Mucosa of descending colon (tissue), 3 donors: ENCODE measurements at regions of chr10 and their contacts with region 1.

Region 1: DNA sequence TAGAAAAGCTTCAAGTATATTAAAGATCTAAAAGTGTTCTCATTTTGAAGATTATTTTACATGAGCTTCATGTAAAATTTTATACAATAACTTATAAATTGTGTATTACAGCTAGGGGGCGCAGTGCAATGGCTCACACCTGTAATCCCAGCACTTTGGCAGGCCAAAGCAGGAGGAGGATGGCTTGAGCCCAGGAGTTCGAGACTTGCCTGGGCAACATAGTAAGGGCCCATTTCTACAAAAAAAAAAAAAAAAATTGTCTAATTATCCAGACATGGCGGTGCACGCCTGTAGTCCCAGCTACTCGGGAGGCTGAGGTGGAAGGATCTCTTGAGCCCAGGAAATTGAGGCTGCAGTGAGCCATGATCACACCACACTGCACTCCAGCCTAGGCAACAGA is 16.6 kb downstream of the ACBD5 start:
- DNase-seq: peak in 2 of 3 donors; percentile 47 to 72
- ATAC-seq: peak; percentile 77
- H3K4me3 ChIP-seq: no peak overlapping the region
- H3K4me1 ChIP-seq: no peaks in the 10 kb centered on the region
- CTCF ChIP-seq: peak; percentile 37

Region 2: GRCh38 chr10:27258838-27259812 is 35.2 kb after region 1 on chr10:
- intact Hi-C with region 1: no loop called
- DNase-seq: peak in 2 of 3 donors; percentile 51 to 54
- ATAC-seq: peak; percentile 72
- H3K4me3 ChIP-seq: no peak overlapping the region
- H3K4me1 ChIP-seq: no peaks in the 10 kb centered on the region
- CTCF ChIP-seq: no peak

Region 3: DNA sequence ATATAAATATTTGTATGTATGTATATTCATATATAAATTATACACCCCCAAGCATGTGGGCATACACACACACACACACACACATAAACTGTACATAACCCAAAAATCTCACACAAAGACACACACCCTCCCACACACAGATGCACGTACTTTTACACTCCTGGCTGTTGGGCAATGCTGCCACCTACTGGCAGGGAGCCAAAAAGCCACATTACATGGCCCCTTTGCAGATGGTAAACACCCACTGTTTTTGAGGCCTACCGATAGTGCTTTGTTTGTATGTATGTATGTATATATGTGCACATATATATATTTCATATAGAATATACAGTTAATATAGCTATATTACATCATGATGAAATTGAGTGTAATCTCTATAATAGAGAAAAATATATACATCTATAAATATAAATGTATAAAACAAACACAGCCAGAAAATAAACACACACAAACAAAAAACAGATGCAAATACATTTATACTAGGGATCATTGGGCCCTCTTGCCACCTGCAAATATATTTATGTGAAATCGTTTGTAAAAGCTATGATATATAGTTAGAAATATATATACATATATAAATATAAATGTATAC is 136.7 kb after region 1 on chr10:
- intact Hi-C with region 1: loop called in 1 of 2 experiments (anchors 10 kb)
- DNase-seq: peak; percentile 65 to 81 (median 80)
- ATAC-seq: peak; percentile 92
- H3K4me3 ChIP-seq: no peak overlapping the region
- H3K4me1 ChIP-seq: no peaks in the 10 kb centered on the region
- CTCF ChIP-seq: peak; percentile 66

Region 4: GRCh38 chr10:27474741-27475140 is 250.8 kb after region 1 on chr10:
- intact Hi-C with region 1: no loop called
- DNase-seq: no peak
- ATAC-seq: no peak
- H3K4me3 ChIP-seq: no peak overlapping the region
- H3K4me1 ChIP-seq: no peaks in the 10 kb centered on the region
- CTCF ChIP-seq: no peak